Activated CD4-positive, alpha-beta T cell treated with anti-CD3 and anti-CD28 coated beads for 36 hours (primary cell): ENCODE measurements at regions of chr16 and their contacts with region 1.

Region 1: GRCh38 chr16:58755989-58756649 is 22.0 kb upstream of the GOT2 start:
- DNase-seq: peak; percentile 90
- ATAC-seq: peak; percentile 97
- H3K4me3 Mint-ChIP-seq: no peak overlapping the region
- H3K27ac Mint-ChIP-seq: no peak overlapping the region
- H3K4me1 Mint-ChIP-seq: peaks cover 7% of the 10 kb centered on the region
- H3K27me3 Mint-ChIP-seq: no peaks in the 10 kb centered on the region

Region 2: DNA sequence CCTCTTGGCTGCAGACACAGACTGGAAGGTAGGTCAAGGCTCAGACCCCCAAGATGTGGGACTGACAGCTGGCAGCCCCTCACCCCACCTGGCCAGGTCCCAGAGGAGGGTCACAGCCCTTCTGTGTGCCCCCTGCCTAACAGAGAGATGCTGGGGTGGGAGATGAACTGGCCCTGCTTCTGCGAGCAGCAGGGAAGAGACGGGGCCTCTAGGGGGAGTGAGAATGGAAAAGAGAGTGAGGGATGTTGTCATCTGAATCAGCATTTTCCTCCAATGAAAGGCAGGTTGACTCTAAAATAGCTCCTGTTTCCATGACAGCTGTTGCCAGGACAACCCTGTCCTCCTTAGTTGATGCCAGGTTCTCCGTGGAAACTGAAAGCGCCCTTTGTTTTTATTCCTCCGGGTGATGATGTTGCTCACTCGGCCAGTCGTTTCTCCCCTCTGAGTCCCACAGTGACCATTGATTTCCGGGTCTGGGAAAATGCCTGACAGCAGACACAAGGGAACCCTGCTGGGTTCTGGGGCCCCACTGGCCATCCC is 261.1 kb before region 1 on chr16:
- CTCF ChIA-PET with region 1: interaction called, 4 read pairs
- POLR2A ChIA-PET with region 1: no interaction called
- intact Hi-C with region 1: loop called in 1 of 2 experiments (anchors 1 kb)
- DNase-seq: peak; percentile 91
- ATAC-seq: peak; percentile 76
- H3K4me3 Mint-ChIP-seq: peak overlapping the region; percentile 17
- H3K27ac Mint-ChIP-seq: peak overlapping the region; percentile 37
- H3K4me1 Mint-ChIP-seq: peaks cover 19% of the 10 kb centered on the region
- H3K27me3 Mint-ChIP-seq: no peaks in the 10 kb centered on the region

Region 3: DNA sequence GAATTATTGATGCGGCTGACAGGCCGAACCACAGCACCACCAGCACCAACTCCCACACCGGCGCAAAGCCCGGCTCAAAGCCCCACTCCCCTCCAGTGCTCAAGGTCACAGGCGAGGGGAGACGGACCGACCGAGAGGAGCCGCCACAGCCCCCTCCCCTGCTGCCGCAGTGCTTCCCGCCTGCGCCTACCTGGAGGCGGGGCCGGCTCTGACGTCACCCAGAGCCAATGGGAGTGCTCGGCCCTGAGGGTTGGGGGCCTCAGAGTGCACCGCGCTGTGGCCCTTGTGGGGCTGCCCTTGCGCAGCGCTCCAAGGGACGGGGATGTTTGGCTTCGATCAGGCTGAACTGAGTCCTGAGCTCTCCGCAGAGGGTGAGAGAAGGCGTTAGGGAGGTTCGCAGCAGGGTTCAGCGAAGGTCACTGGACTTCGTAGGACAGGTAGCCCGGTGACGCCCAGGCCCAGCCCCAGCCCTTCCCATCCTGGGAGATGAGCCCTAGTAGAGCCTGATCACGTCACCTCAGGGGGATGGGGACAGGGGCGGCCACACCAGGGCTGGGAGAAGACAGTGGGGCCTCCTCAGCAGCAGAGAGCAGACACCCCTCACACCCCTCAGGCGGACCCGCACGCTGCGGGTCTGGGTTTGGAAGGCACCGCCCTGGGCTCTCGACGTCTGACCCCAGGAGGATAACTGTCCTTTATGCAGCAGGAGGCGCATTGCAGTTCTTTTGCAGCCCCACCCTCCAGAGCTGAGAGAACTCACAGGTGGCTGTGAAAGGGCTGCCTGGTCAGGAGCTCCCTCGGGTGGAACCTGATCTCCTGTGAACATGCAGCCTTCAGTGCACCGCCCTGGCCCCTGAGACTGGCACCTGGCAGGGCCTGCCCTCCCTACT is 254.6 kb before region 1 on chr16:
- CTCF ChIA-PET with region 1: interaction called, 10 read pairs
- POLR2A ChIA-PET with region 1: no interaction called
- intact Hi-C with region 1: no loop called
- DNase-seq: peak; percentile 75
- ATAC-seq: peak; percentile 51
- H3K4me3 Mint-ChIP-seq: peak overlapping the region; percentile 68
- H3K27ac Mint-ChIP-seq: peak overlapping the region; percentile 75
- H3K4me1 Mint-ChIP-seq: peaks cover 19% of the 10 kb centered on the region
- H3K27me3 Mint-ChIP-seq: no peaks in the 10 kb centered on the region

Region 4: GRCh38 chr16:58678716-58679115 is 77.4 kb before region 1 on chr16:
- CTCF ChIA-PET with region 1: interaction called, 11 read pairs
- POLR2A ChIA-PET with region 1: no interaction called
- intact Hi-C with region 1: loop called in 1 of 2 experiments (anchors 2 kb)
- DNase-seq: peak; percentile 32
- ATAC-seq: no peak
- H3K4me3 Mint-ChIP-seq: no peak overlapping the region
- H3K27ac Mint-ChIP-seq: no peak overlapping the region
- H3K4me1 Mint-ChIP-seq: peaks cover 9% of the 10 kb centered on the region
- H3K27me3 Mint-ChIP-seq: no peaks in the 10 kb centered on the region

Region 5: GRCh38 chr16:58684354-58685083 is 71.6 kb before region 1 on chr16 and contains the start of gene SLC38A7:
- CTCF ChIA-PET with region 1: interaction called, 11 read pairs
- POLR2A ChIA-PET with region 1: no interaction called
- intact Hi-C with region 1: loop called (anchors 1 to 2 kb)
- DNase-seq: peak; percentile 88
- ATAC-seq: peak; percentile 93
- H3K4me3 Mint-ChIP-seq: peak within 1 kb of the TSS; percentile 86
- H3K27ac Mint-ChIP-seq: peak within 1 kb of the TSS; percentile 74
- H3K4me1 Mint-ChIP-seq: peaks cover 19% of the 10 kb centered on the region
- H3K27me3 Mint-ChIP-seq: no peaks in the 10 kb centered on the region
- total RNA-seq, gene SLC38A7: 4.5 to 6.5 TPM